CD4-positive, alpha-beta T cell (primary cell): ENCODE measurements at regions of chr13 and their contacts with region 1.

Region 1: GRCh38 chr13:99269627-99270241 is 11.6 kb upstream of the GPR18 start:
- DNase-seq: peak in 5 of 14 experiments; percentile 32 to 86 (median 79)
- ATAC-seq: peak; percentile 80
- H3K4me3 ChIP-seq: no peak overlapping the region
- H3K4me3 Mint-ChIP-seq: no peak overlapping the region
- H3K27ac ChIP-seq: no peak overlapping the region
- H3K27ac Mint-ChIP-seq: peak overlapping the region; percentile 87
- H3K4me1 ChIP-seq: peaks cover 32% of the 10 kb centered on the region
- H3K4me1 Mint-ChIP-seq: peaks cover 78% of the 10 kb centered on the region
- H3K27me3 ChIP-seq: no peaks in the 10 kb centered on the region
- H3K27me3 Mint-ChIP-seq: no peaks in the 10 kb centered on the region
- CTCF ChIP-seq: peak; percentile 94

Region 2: DNA sequence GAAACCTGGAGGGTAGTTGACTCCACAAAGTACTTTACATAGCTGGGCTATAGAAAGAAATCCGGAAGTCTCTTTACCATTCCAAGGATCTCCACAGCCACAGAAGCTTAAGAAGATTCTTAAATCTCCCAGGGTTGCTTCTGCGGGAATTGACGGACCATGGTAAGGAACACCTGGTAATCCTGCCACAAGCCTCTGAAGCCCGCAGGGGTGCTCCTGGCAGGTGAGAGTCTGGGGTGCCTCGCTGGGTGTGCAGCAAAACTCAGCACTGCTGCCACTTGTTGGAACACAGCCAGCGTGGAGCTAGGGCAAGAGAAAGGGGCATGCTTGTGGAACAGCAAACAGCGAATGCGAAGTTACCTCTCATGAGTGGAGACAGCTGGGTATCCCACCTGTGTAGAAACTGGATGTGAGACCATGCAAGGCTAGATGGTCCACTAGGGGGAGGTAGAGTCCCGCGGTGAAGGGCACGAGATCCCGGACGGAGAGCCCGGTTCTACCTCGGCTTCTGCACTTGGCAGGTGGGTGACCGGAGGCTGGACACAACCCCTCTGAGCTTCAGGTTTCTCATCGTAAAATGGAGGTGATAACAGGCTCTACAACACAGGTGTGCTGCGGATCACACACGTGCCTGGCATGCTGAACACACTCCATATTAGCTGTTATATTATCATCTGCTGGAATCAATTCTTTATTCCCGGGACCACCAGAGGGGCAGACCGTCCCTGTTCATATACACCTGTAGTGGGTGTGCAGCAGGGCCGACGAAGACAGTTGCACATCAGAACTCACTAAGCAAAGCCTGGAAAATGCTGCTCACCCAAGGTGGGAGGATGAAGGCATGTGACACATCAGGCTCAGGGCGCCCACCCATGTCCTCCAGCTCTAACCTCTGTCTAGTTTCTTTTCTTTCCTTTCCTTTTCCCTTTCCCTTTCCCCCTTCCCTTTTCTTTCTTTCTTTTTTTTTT is 93.1 kb before region 1 on chr13:
- CTCF ChIA-PET with region 1: interaction called, 150 read pairs
- POLR2A ChIA-PET with region 1: interaction called, 9 read pairs
- intact Hi-C with region 1: loop called (anchors 1 kb)
- DNase-seq: peak; percentile 64 to 89 (median 74)
- ATAC-seq: peak; percentile 93
- H3K4me3 ChIP-seq: peak overlapping the region; percentile 16
- H3K4me3 Mint-ChIP-seq: peak overlapping the region; percentile 42
- H3K27ac ChIP-seq: no peak overlapping the region
- H3K27ac Mint-ChIP-seq: peak overlapping the region; percentile 76
- H3K4me1 ChIP-seq: peaks cover 41% of the 10 kb centered on the region
- H3K4me1 Mint-ChIP-seq: peaks cover 40% of the 10 kb centered on the region
- H3K27me3 ChIP-seq: no peaks in the 10 kb centered on the region
- H3K27me3 Mint-ChIP-seq: no peaks in the 10 kb centered on the region
- CTCF ChIP-seq: peak; percentile 94

Region 3: DNA sequence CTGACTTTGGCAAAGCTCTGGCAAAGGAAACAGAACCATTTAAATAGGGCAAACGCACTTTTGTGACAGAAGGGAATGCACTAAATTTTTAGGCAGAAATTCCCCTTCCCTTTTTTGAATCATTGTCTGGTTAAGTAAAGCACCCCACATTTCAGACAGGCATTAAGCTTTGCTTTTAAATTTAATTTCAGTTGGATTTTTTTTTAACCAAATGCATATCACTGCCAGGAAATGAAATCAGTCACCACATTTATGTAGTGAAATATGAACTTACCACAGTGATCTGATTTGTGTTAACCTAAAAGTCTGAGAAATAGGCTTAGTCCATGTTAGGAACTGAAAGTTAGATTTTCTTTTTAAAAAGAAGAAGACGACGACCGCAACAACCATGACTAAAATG is 26.7 kb after region 1 on chr13:
- CTCF ChIA-PET with region 1: interaction called, 44 read pairs
- POLR2A ChIA-PET with region 1: interaction called, 22 read pairs
- intact Hi-C with region 1: loop called in 1 of 2 experiments (anchors 2 kb)
- DNase-seq: peak in 3 of 14 experiments; percentile 63 to 74 (median 68)
- ATAC-seq: peak; percentile 60
- H3K4me3 ChIP-seq: peak overlapping the region; percentile 28
- H3K4me3 Mint-ChIP-seq: peak overlapping the region; percentile 86
- H3K27ac ChIP-seq: peak overlapping the region; percentile 39 to 78
- H3K27ac Mint-ChIP-seq: peak overlapping the region; percentile 100
- H3K4me1 ChIP-seq: peaks cover 43% of the 10 kb centered on the region
- H3K4me1 Mint-ChIP-seq: peaks cover 93% of the 10 kb centered on the region
- H3K27me3 ChIP-seq: no peaks in the 10 kb centered on the region
- H3K27me3 Mint-ChIP-seq: no peaks in the 10 kb centered on the region
- CTCF ChIP-seq: no peak

Region 4: DNA sequence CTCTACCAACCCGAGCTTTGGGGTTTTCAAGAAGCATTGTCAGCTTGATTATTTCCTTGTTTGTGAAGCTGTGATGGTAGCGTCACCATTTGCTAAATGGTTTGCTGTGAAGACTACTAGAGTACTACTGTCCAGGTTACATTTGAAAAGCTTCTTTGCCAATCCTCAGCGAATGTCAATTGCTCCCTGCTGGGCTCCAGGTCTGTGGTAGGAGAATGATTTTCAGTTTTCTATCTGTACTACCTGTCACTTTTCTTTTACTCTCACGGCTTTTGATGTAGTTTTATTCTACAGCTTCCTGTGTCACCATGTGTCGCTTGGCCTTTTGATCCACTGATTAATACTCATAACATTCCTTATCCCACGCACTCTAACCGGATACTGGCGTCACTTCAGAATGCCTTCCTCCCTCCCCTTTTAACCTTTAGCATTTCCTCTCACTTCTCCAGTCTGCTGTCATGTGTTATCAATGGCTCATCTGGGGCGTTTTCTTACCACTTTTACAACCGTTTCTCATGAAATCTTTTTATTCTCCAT is 45.0 kb after region 1 on chr13:
- CTCF ChIA-PET with region 1: interaction called, 19 read pairs
- POLR2A ChIA-PET with region 1: interaction called, 6 read pairs
- intact Hi-C with region 1: loop called in 1 of 2 experiments (anchors 5 kb)
- DNase-seq: peak in 7 of 14 experiments; percentile 26 to 92 (median 73)
- ATAC-seq: peak; percentile 83
- H3K4me3 ChIP-seq: peak overlapping the region; percentile 50
- H3K4me3 Mint-ChIP-seq: peak overlapping the region; percentile 61
- H3K27ac ChIP-seq: peak overlapping the region; percentile 88 to 89
- H3K27ac Mint-ChIP-seq: peak overlapping the region; percentile 89
- H3K4me1 ChIP-seq: peaks cover 72% of the 10 kb centered on the region
- H3K4me1 Mint-ChIP-seq: peaks cover 85% of the 10 kb centered on the region
- H3K27me3 ChIP-seq: no peaks in the 10 kb centered on the region
- H3K27me3 Mint-ChIP-seq: no peaks in the 10 kb centered on the region
- CTCF ChIP-seq: no peak

Region 5: DNA sequence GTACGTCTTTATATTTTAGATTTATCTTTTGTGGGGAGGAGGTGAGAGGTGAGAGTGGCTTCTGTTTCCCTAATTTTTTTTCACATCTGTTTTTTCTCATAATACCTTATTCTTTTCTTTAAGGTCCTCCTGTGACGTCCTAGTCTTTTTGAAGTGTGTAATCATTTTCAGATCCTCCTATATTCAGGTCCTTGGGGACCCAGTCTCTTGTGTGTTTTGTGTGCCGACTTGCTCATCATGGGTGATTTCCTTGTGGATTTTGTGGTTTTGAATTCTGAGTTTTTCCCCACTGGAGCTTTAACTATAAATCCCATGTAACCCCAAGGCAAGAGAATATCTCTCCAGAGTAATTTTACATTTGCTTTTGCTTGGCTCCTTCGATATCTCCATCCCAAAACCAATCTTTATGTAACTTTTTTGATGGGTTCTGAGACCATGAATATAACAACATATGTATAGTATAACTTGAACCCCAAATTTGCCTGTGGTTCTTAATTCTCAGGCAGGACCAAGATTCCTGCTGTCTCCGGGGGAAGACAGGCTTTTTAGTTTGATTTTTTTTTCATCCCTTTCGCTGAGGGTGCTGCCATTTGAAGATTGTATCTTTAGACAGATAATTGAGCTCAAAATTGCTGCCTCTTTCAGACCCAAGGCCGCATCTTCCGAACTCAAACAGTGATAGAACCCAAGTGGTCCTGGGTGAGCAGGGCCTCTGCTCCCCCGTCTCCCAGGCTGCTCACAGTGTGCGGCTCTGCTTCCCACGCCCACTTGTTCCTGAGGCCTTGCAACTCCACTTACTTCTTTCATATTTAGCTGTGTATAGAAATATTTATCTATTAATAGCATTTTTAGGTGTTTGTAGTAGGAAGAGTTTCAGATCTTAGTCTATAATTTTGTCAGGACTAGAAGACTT is 96.6 kb after region 1 on chr13:
- CTCF ChIA-PET with region 1: interaction called, 20 read pairs
- POLR2A ChIA-PET with region 1: interaction called, 5 read pairs
- intact Hi-C with region 1: no loop called
- DNase-seq: peak in 2 of 14 experiments; percentile 31 to 58
- ATAC-seq: no peak
- H3K4me3 ChIP-seq: no peak overlapping the region
- H3K4me3 Mint-ChIP-seq: peak overlapping the region; percentile 79
- H3K27ac ChIP-seq: peak overlapping the region; percentile 25 to 65
- H3K27ac Mint-ChIP-seq: peak overlapping the region; percentile 97
- H3K4me1 ChIP-seq: peaks cover 54% of the 10 kb centered on the region
- H3K4me1 Mint-ChIP-seq: peaks cover 94% of the 10 kb centered on the region
- H3K27me3 ChIP-seq: no peaks in the 10 kb centered on the region
- H3K27me3 Mint-ChIP-seq: no peaks in the 10 kb centered on the region
- CTCF ChIP-seq: no peak

Region 6: GRCh38 chr13:99417201-99418102 is 147.7 kb after region 1 on chr13:
- CTCF ChIA-PET with region 1: interaction called, 5 read pairs
- POLR2A ChIA-PET with region 1: interaction called, 10 read pairs
- intact Hi-C with region 1: no loop called
- DNase-seq: peak in 6 of 14 experiments; percentile 41 to 66 (median 52)
- ATAC-seq: peak; percentile 30
- H3K4me3 ChIP-seq: peak overlapping the region; percentile 52
- H3K4me3 Mint-ChIP-seq: no peak overlapping the region
- H3K27ac ChIP-seq: peak overlapping the region; percentile 59 to 76
- H3K27ac Mint-ChIP-seq: no peak overlapping the region
- H3K4me1 ChIP-seq: peaks cover 88% of the 10 kb centered on the region
- H3K4me1 Mint-ChIP-seq: peaks cover 62% of the 10 kb centered on the region
- H3K27me3 ChIP-seq: no peaks in the 10 kb centered on the region
- H3K27me3 Mint-ChIP-seq: no peaks in the 10 kb centered on the region
- CTCF ChIP-seq: no peak

Region 7: DNA sequence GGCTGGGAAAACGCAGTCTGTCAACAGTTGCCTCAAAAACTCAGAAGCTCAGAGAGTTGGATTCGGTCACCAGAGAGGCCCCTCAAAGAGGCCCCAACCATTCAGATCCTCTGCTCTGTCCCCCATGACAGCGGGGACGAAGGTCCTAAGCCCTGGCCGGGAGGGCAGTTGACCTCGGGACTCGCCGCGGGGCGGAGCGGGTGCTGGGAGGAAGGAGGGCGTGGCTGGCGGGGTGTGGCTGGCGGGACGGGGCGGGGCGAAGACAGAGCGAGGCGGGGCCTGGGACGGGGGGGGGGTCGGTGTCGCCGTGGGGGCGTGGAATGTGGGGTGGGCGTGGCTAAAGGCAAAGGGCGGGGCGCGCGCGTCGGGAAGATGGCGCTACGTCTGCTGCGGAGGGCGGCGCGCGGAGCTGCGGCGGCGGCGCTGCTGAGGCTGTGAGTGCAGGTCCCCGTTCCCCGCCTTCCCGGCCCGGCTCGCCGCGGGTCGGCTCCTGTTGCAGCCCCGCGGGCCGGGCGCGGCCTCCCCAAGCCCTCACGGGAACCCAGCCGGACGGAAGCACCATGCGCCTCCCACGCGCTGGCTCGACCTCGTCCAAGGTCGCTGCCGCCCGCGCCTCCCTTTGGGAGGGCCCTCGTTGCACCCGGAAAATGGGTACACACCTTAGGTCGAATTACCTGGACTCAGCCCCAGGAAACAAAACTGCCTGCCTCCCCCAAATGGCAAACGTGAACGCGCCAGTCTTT is 336.8 kb after region 1 on chr13:
- CTCF ChIA-PET with region 1: no interaction called
- POLR2A ChIA-PET with region 1: no interaction called
- intact Hi-C with region 1: loop called in 1 of 2 experiments (anchors 10 kb)
- DNase-seq: peak; percentile 85 to 97 (median 92)
- ATAC-seq: peak; percentile 88
- H3K4me3 ChIP-seq: peak within 1 kb of the TSS; percentile 73
- H3K4me3 Mint-ChIP-seq: peak within 1 kb of the TSS; percentile 96
- H3K27ac ChIP-seq: peak within 1 kb of the TSS; percentile 37 to 83
- H3K27ac Mint-ChIP-seq: peak within 1 kb of the TSS; percentile 91
- H3K4me1 ChIP-seq: peaks cover 32% of the 10 kb centered on the region
- H3K4me1 Mint-ChIP-seq: peaks cover 62% of the 10 kb centered on the region
- H3K27me3 ChIP-seq: no peaks in the 10 kb centered on the region
- H3K27me3 Mint-ChIP-seq: no peaks in the 10 kb centered on the region
- CTCF ChIP-seq: peak; percentile 4

Region 8: DNA sequence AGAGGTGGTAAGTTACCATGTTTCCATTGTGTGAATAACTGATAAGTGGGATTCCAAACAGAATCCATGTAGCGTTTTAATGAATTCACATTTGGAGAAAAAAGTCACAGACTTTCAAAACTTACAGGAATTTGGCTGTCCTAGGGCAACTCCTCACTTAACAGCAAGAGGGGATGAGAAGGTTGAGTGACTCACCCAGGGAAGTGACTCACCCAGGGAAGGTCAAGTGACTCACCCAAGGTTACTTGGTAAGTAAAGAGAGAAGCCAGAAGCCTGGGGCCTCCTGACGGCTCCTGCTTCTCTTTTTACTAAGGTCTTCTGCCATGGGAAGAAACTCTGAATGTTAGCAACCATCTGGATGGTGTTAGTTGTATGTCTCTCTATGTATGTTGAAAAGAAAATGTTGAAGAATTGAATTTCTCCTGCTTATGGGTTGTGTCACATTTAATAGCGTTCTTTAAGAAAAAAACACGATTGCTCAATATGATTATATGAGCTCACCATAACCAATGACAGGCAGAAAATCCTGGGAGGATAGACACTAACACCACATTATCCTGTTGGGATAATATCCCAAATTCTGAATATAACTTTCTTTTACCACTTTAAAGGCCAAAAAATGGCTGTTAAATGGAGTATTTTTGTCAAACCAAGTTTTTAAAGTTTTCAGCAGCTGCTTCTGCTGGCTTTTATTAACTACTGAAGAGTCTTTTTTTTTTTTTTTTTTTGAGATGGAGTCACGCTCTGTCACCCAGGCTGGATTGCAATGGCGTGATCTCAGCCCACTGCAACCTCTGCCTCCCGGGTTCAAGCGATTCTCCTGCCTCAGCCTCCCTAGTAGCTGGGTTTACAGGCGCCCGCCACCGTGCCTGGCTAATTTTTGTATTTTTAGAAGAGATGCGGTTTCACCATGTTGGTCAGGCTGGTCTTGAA is 1123.2 kb after region 1 on chr13:
- CTCF ChIA-PET with region 1: no interaction called
- POLR2A ChIA-PET with region 1: no interaction called
- intact Hi-C with region 1: no loop called
- DNase-seq: peak in 11 of 14 experiments; percentile 1 to 76 (median 36)
- ATAC-seq: no peak
- H3K4me3 ChIP-seq: no peak overlapping the region
- H3K4me3 Mint-ChIP-seq: no peak overlapping the region
- H3K27ac ChIP-seq: no peak overlapping the region
- H3K27ac Mint-ChIP-seq: no peak overlapping the region
- H3K4me1 ChIP-seq: no peaks in the 10 kb centered on the region
- H3K4me1 Mint-ChIP-seq: peaks cover 17% of the 10 kb centered on the region
- H3K27me3 ChIP-seq: no peaks in the 10 kb centered on the region
- H3K27me3 Mint-ChIP-seq: no peaks in the 10 kb centered on the region
- CTCF ChIP-seq: no peak

Region 9: GRCh38 chr13:100658363-100658762 is 1388.6 kb after region 1 on chr13:
- CTCF ChIA-PET with region 1: no interaction called
- POLR2A ChIA-PET with region 1: no interaction called
- intact Hi-C with region 1: no loop called
- DNase-seq: peak in 1 of 14 experiments; percentile 40
- ATAC-seq: no peak
- H3K4me3 ChIP-seq: no peak overlapping the region
- H3K4me3 Mint-ChIP-seq: no peak overlapping the region
- H3K27ac ChIP-seq: no peak overlapping the region
- H3K27ac Mint-ChIP-seq: no peak overlapping the region
- H3K4me1 ChIP-seq: peaks cover 16% of the 10 kb centered on the region
- H3K4me1 Mint-ChIP-seq: peaks cover 19% of the 10 kb centered on the region
- H3K27me3 ChIP-seq: no peaks in the 10 kb centered on the region
- H3K27me3 Mint-ChIP-seq: no peaks in the 10 kb centered on the region
- CTCF ChIP-seq: no peak